Endothelial cell of umbilical vein (primary cell): ENCODE measurements at regions of chr21 and their contacts with region 1.

Region 1: DNA sequence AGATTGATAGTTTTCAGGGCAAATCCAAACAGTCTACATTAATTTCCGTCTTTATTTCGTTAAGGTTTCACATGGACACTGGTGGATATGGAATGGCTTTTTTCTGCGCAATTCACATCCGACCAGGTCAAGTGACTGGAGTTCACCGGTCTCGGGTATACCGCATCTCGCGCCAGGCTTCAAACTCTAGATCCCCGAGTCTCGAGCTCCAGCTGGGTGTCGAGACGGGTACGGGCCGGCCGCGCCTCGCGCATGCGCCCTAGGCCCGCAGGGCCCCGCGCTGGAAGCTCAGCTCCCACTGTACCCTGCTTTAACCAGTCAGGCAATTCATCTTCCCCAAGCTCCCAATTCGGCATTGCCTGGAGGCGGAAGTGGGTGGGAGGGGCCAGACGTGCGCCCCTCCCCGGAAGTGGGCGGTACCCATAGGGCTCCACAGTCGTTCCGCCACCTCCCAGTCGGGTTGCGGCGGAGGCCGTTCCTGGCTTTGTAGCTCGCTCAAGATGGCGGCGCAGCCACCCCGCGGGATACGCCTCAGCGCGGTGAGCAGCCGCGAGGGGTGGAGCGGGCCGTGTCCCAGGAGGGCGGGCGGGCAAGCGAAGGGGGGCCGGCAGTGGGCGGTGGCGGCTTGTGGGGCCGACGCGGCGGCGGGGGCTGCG is at the start of gene MORC3:
- DNase-seq: peak; percentile 100
- H3K4me3 ChIP-seq: peak within 1 kb of the TSS; percentile 77 to 97 (median 95)
- H3K27ac ChIP-seq: peak within 1 kb of the TSS; percentile 83
- H3K4me1 ChIP-seq: peaks cover 19% of the 10 kb centered on the region
- H3K27me3 ChIP-seq: peaks cover 0 to 5% of the 10 kb centered on the region in 2 experiments
- CTCF ChIP-seq: no peak
- POLR2A ChIP-seq: peak; percentile 97
- total RNA-seq, gene MORC3: 20.0 and 25.3 TPM in 2 replicates

Region 2: GRCh38 chr21:36135391-36136102 is 184.3 kb before region 1 on chr21:
- CTCF ChIA-PET with region 1: interaction called, 3 read pairs
- POLR2A ChIA-PET with region 1: interaction called, 11 read pairs
- dilution Hi-C with region 1: no loop called
- intact Hi-C with region 1: loop called (anchors 5 kb)
- DNase-seq: peak; percentile 76
- H3K4me3 ChIP-seq: peak overlapping the region; percentile 32 to 87 (median 77)
- H3K27ac ChIP-seq: peak overlapping the region; percentile 27
- H3K4me1 ChIP-seq: peaks cover 14% of the 10 kb centered on the region
- H3K27me3 ChIP-seq: no peaks in the 10 kb centered on the region
- CTCF ChIP-seq: no peak
- POLR2A ChIP-seq: no peak

Region 3: DNA sequence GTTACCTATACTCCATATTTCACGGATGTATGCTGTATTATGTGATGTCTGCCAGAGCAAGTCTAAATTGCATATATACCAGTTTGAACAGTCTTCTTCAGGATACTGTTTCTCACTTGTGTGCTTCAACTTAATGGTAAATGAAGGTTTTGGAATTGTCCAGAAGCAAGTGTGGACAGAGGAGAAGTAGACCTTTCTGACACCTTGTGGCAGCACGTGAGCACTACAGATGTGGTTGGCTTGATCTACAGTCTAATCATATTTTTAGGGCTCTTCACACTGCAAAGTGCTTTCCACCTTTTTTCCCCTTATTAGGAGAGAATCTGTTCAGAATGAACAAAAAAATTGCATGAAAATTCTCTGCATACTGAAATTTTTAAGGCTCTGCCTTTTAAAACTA is 11.0 kb after region 1 on chr21:
- CTCF ChIA-PET with region 1: interaction called, 29 read pairs
- POLR2A ChIA-PET with region 1: interaction called, 5 read pairs
- dilution Hi-C with region 1: no loop called
- intact Hi-C with region 1: no loop called
- DNase-seq: peak; percentile 64
- H3K4me3 ChIP-seq: no peak overlapping the region
- H3K27ac ChIP-seq: no peak overlapping the region
- H3K4me1 ChIP-seq: peaks cover 20% of the 10 kb centered on the region
- H3K27me3 ChIP-seq: no peaks in the 10 kb centered on the region
- CTCF ChIP-seq: peak; percentile 65 to 73
- POLR2A ChIP-seq: no peak